WTC11 (cell line): ENCODE measurements at regions of chr2 and their contacts with region 1.

Region 1: DNA sequence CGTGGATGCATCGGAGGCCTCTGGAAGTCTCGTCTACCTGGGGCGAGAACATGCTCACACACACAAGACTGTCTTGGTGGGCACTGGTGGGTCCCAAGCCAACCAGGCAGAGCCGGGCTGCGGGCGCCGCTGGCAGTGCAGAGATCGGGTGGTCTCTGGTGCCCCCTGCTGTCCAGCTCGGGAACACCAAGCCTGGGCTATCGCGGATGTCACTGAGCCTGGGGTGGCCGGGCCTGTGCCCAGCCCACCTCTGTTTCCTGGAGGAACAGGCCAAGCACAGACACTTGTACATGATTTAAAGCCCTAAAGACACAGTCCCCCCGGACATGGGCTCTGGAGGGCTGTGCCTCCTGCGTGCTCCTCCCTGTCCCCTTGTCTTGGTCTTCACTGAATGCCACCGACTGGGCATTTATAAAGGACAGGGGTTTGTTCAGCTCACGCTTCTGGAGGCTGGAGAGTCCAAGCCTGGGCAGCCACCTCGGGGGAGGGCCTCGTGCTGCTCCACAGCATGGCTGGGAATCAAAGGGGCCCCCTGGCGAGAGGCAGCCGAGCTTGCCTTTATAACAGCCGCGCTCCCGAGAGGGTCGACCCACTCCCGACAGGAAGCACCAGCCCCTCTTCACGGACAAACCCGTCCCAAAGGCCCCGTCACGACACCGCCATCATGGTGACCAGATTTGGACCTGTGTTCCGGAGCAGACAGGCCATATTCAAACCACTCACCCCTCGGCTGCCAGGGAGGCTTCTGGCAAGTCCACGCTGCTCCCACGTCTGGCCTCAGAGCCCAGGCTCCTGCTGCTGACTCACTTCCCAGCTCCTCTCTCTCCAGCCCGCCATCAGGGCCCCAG is 3.6 kb upstream of the OTOS start:
- DNase-seq: peak; percentile 89
- ATAC-seq: peak; percentile 90
- H3K4me3 Mint-ChIP-seq: no peak overlapping the region
- H3K27ac Mint-ChIP-seq: no peak overlapping the region
- H3K4me1 Mint-ChIP-seq: peaks cover 15% of the 10 kb centered on the region
- H3K27me3 Mint-ChIP-seq: no peaks in the 10 kb centered on the region
- CTCF ChIP-seq: peak; percentile 92

Region 2: GRCh38 chr2:240021488-240022104 is 122.4 kb before region 1 on chr2:
- CTCF ChIA-PET with region 1: interaction called, 13 read pairs
- POLR2A ChIA-PET with region 1: no interaction called
- DNase-seq: peak; percentile 93
- ATAC-seq: peak; percentile 77
- H3K4me3 Mint-ChIP-seq: no peak overlapping the region
- H3K27ac Mint-ChIP-seq: no peak overlapping the region
- H3K4me1 Mint-ChIP-seq: peaks cover 10% of the 10 kb centered on the region
- H3K27me3 Mint-ChIP-seq: no peaks in the 10 kb centered on the region; the same call in 1 of the 2 replicates
- CTCF ChIP-seq: peak; percentile 75

Region 3: GRCh38 chr2:240066487-240066886 is 77.5 kb before region 1 on chr2:
- CTCF ChIA-PET with region 1: interaction called, 84 read pairs
- POLR2A ChIA-PET with region 1: no interaction called
- DNase-seq: no peak
- ATAC-seq: no peak
- H3K4me3 Mint-ChIP-seq: no peak overlapping the region
- H3K27ac Mint-ChIP-seq: no peak overlapping the region
- H3K4me1 Mint-ChIP-seq: peaks cover 24% of the 10 kb centered on the region
- H3K27me3 Mint-ChIP-seq: no peaks in the 10 kb centered on the region
- CTCF ChIP-seq: no peak

Region 4: GRCh38 chr2:240269380-240269779 is 125.4 kb after region 1 on chr2:
- CTCF ChIA-PET with region 1: no interaction called
- POLR2A ChIA-PET with region 1: no interaction called
- DNase-seq: no peak
- ATAC-seq: no peak
- H3K4me3 Mint-ChIP-seq: no peak overlapping the region
- H3K27ac Mint-ChIP-seq: no peak overlapping the region
- H3K4me1 Mint-ChIP-seq: no peaks in the 10 kb centered on the region
- H3K27me3 Mint-ChIP-seq: peaks cover 38% of the 10 kb centered on the region
- CTCF ChIP-seq: no peak